OCI-LY7 (cell line): ENCODE measurements at regions of chr2 and their contacts with region 1.

Region 1: DNA sequence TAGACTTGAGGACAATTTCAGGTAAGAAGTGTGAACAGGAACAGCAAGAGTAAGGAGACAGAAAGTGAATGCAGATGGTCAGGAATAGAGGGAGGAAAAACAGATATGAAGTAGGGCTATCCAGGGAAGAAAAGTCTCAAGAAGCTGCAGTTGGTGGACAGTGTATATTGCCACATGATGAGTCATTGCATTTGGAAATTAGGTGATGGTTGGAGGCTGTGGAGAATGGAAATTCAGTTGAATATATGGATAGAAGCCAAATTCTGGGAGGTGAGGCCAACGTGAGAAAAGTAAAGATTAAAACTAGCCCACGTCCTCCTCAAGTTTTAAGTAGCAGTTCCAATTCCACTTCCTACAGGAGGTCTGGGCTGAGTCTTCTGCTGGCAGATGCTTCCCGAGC is 158.4 kb downstream of the UBE2E3 start:
- DNase-seq: no peak
- H3K4me3 ChIP-seq: no peak overlapping the region
- H3K27ac ChIP-seq: no peak overlapping the region
- H3K4me1 ChIP-seq: no peaks in the 10 kb centered on the region
- CTCF ChIP-seq: no peak

Region 2: DNA sequence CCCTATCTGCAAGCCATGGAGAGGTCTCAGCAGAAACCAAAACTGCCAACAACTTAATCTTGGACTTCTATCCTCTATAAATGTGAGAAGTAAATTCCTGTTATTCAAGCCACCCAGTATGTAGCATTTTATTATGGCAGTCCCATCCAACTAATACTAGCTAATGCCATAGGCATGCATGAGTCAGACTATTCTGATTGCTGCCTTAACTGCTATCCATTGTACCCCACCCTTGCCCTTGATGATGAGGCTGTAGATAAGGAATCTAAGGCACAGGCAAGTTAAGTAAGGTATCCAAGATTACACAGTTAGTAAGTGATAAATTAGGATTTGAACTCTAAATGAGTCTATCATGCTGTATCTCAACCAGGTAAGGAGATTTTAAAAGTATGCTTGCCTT is 64.6 kb after region 1 on chr2:
- CTCF ChIA-PET with region 1: no interaction called
- POLR2A ChIA-PET with region 1: no interaction called
- intact Hi-C with region 1: loop called (anchors 2 kb)
- DNase-seq: no peak
- H3K4me3 ChIP-seq: no peak overlapping the region
- H3K27ac ChIP-seq: no peak overlapping the region
- H3K4me1 ChIP-seq: no peaks in the 10 kb centered on the region
- CTCF ChIP-seq: no peak

Region 3: GRCh38 chr2:182197529-182197928 is 1058.7 kb after region 1 on chr2:
- CTCF ChIA-PET with region 1: no interaction called
- POLR2A ChIA-PET with region 1: no interaction called
- intact Hi-C with region 1: no loop called
- DNase-seq: no peak
- H3K4me3 ChIP-seq: no peak overlapping the region
- H3K27ac ChIP-seq: no peak overlapping the region
- H3K4me1 ChIP-seq: no peaks in the 10 kb centered on the region
- CTCF ChIP-seq: no peak